Posterior cingulate gyrus (tissue), 11 donors: ENCODE measurements at regions of chr22 and their contacts with region 1.

Region 1: GRCh38 chr22:28855355-28856094 is 27.8 kb upstream of the ZNRF3 start:
- DNase-seq: peak in 4 of 10 donors; percentile 27 to 49 (median 37)

Region 2: GRCh38 chr22:29040385-29041275 is 185.1 kb after region 1 on chr22:
- intact Hi-C with region 1: loop called (anchors 1 kb)
- DNase-seq: peak in 6 of 10 donors; percentile 48 to 87 (median 67)

Region 3: GRCh38 chr22:29154364-29155048 is 299.0 kb after region 1 on chr22:
- intact Hi-C with region 1: loop called (anchors 10 kb)
- DNase-seq: peak; percentile 61 to 97 (median 80)

Region 4: GRCh38 chr22:29245637-29246385 is 390.3 kb after region 1 on chr22:
- intact Hi-C with region 1: loop called (anchors 10 kb)
- DNase-seq: peak; percentile 48 to 96 (median 81)